Natural killer cell (primary cell): ENCODE measurements at regions of chr11 and their contacts with region 1.

Region 1: DNA sequence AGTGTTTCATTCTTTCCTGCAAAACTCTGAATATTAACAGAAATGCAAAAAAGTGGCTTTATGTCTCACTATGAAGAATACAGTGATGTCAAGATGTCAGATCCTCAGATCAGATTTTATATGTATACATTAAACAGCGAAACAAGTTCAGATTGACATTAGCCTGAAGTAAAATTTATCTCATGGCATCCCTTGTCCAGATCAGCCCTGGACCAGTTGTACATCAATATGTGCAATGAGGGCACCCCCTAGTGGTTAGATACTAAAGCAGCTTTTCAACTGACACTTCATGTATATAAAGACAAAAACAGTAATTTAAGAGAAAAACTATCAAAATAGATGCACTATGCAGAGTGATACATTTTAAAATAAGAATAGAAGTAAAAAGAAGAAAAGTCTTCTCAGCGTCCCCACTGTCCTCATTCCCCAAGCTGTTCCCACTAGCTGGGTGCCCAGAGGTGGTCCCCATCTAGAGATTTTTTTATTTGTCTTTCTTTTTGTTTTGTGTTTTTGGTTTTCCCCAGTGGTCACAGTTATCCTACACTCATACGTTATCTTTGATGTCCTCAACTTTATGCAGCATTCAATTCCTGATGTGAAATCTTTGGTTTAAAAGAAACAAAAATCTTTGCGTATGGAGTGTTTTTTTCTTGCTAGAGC is 2193.4 kb upstream of the RAG2 start:
- DNase-seq: peak in 1 of 2 donors; percentile 9
- ATAC-seq: peak; percentile 71 to 85 (median 75)
- H3K4me3 ChIP-seq: no peak overlapping the region
- H3K4me3 Mint-ChIP-seq: no peak overlapping the region
- H3K27ac ChIP-seq: no peak overlapping the region
- H3K27ac Mint-ChIP-seq: no peak overlapping the region
- H3K4me1 ChIP-seq: no peaks in the 10 kb centered on the region
- H3K4me1 Mint-ChIP-seq: no peaks in the 10 kb centered on the region
- H3K27me3 ChIP-seq: no peaks in the 10 kb centered on the region
- H3K27me3 Mint-ChIP-seq: no peaks in the 10 kb centered on the region
- CTCF ChIP-seq: peak; percentile 80

Region 2: DNA sequence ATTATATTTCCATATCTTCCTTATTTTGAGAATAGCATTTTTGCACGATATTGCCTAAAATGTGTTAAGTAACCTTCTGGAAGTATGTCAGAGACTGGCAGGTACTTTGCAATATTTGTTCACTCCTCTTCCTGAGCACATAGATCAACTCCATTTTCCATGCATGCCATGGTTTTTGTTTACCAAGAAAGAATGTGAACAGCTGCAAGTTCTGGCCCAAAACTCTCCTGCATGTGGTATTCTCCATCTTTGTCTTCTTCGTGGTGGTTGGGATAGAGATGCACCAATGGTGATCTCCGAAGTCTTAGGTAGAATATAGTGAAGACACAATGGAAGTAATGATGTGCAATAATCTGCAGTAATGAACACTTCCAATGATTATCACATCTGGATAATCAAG is 47.6 kb after region 1 on chr11:
- intact Hi-C with region 1: no loop called
- DNase-seq: no peak
- ATAC-seq: no peak
- H3K4me3 ChIP-seq: no peak overlapping the region
- H3K4me3 Mint-ChIP-seq: no peak overlapping the region
- H3K27ac ChIP-seq: no peak overlapping the region
- H3K27ac Mint-ChIP-seq: no peak overlapping the region
- H3K4me1 ChIP-seq: no peaks in the 10 kb centered on the region
- H3K4me1 Mint-ChIP-seq: no peaks in the 10 kb centered on the region
- H3K27me3 ChIP-seq: no peaks in the 10 kb centered on the region
- H3K27me3 Mint-ChIP-seq: no peaks in the 10 kb centered on the region
- CTCF ChIP-seq: no peak

Region 3: GRCh38 chr11:39374963-39375698 is 583.7 kb after region 1 on chr11:
- intact Hi-C with region 1: loop called (anchors 10 kb)
- DNase-seq: peak in 1 of 2 donors; percentile 63
- ATAC-seq: peak in 2 of 3 donors; percentile 50 to 64
- H3K4me3 ChIP-seq: no peak overlapping the region
- H3K4me3 Mint-ChIP-seq: no peak overlapping the region
- H3K27ac ChIP-seq: no peak overlapping the region
- H3K27ac Mint-ChIP-seq: no peak overlapping the region
- H3K4me1 ChIP-seq: no peaks in the 10 kb centered on the region
- H3K4me1 Mint-ChIP-seq: peaks cover 5 to 8% of the 10 kb centered on the region in 2 donors
- H3K27me3 ChIP-seq: no peaks in the 10 kb centered on the region
- H3K27me3 Mint-ChIP-seq: no peaks in the 10 kb centered on the region
- CTCF ChIP-seq: peak; percentile 77